Psoas muscle (tissue), 8 donors: ENCODE measurements at regions of chr15 and their contacts with region 1.

Region 1: GRCh38 chr15:79339564-79340314 is 28.8 kb downstream of the TMED3 start:
- DNase-seq: no peak
- ATAC-seq: no peak
- H3K4me3 ChIP-seq: no peak overlapping the region
- H3K27ac ChIP-seq: no peak overlapping the region
- H3K4me1 ChIP-seq: no peaks in the 10 kb centered on the region
- H3K27me3 ChIP-seq: peaks cover 0 to 2% (median 0%) of the 10 kb centered on the region in 3 donors
- CTCF ChIP-seq: peak; percentile 56

Region 2: GRCh38 chr15:79408041-79408440 is 68.3 kb after region 1 on chr15:
- intact Hi-C with region 1: loop called in 1 of 2 experiments (anchors 10 kb)
- DNase-seq: no peak
- ATAC-seq: no peak
- H3K4me3 ChIP-seq: no peak overlapping the region
- H3K27ac ChIP-seq: no peak overlapping the region
- H3K4me1 ChIP-seq: no peaks in the 10 kb centered on the region
- H3K27me3 ChIP-seq: peaks cover 0 to 2% (median 0%) of the 10 kb centered on the region in 3 donors
- CTCF ChIP-seq: no peak